Stomach (tissue), 19 donors: ENCODE measurements at regions of chr20 and their contacts with region 1.

Region 1: DNA sequence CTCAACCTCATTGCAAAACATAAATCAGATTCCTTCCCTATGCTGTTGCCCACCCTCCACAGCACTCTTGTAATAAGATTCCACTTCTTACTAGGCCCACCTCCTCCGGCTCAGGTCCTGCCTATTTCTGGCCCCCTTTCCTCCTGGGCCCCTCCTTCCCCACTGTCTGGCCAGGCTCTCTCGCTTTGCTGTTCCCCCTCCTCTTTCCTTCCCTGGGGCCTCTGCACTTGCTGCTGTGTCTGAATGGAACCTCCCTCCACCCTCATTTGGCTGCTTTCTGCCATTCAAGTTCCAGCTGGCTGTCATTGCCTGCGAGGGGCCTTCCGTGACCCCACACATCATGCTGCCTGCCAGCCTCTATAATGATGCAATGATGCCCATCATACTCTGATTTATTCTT is 38.9 kb downstream of the ARHGAP40 start:
- DNase-seq: no peak
- H3K4me3 ChIP-seq: no peak overlapping the region
- H3K27ac ChIP-seq: no peak overlapping the region
- H3K4me1 ChIP-seq: no peaks in the 10 kb centered on the region
- H3K27me3 ChIP-seq: peaks cover 0 to 41% (median 5%) of the 10 kb centered on the region in 3 donors
- CTCF ChIP-seq: no peak
- EP300 ChIP-seq: no peak
- POLR2A ChIP-seq: no peak

Region 2: DNA sequence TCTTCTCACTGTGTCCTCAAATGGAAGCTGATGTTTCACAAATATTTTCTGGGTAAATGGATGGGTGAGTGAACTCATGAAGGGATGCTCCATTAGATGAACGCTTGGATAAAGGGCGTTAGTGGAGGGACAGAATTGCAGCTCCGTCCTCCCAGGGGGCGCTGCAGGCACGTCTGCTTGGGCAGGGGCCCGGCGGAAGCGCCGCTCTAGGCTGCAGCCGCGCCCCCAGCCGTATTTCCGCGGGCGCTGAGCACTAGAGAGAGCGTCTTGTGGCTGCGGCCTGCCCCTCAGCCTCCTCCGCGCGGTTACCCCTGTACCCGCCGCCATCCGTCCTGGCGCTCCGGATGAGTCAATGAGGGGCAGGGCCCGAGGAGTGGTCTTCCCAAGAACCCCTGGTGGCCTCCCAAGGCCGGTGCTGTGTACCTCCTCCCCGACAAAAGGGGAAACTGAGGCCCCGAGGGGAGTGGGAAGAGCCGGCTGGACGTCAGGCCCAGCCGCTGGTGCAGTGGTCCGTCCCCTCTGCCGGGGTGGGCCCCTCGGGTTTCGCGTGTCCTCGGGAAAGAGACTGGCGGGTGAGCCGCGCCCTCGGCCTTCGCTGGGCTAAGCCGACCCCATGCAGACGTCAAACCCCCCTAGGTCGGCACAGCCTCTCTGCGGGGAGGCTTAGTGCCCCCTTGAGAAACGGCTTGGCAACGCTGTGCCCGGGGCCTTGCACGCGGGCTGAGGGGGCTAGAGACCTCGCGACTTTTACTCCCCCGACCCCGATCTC is 193.9 kb before region 1 on chr20:
- intact Hi-C with region 1: no loop called
- DNase-seq: peak; percentile 93 to 97
- H3K4me3 ChIP-seq: peak overlapping the region; percentile 68 to 95 (median 86)
- H3K27ac ChIP-seq: peak overlapping the region; percentile 85 to 90 (median 89)
- H3K4me1 ChIP-seq: peaks cover 9 to 29% (median 24%) of the 10 kb centered on the region in 4 donors
- H3K27me3 ChIP-seq: peaks cover 0 to 3% (median 0%) of the 10 kb centered on the region in 3 donors
- CTCF ChIP-seq: peak in 5 of 7 experiments; percentile 82 to 95 (median 87)
- EP300 ChIP-seq: no peak
- POLR2A ChIP-seq: no peak

Region 3: DNA sequence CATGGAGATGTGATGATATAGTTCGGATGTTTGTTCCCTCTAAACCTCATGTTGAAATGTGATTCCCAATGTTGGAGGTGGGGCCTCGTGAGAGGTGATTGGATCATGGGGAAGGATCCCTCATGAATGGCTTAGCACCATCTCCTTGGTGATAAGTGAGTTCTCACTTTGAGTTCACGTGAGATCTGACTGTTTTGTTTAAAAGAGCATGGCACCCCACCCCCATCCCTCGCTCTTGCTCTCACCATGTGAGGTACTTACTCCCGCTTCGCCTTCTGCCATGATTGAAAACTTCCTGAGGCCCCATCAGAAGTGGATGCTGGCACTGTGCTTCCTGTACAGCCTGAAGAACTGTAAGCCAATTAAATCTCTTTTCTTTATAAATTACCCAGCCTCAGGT is 94.7 kb after region 1 on chr20:
- intact Hi-C with region 1: loop called (anchors 5 kb)
- DNase-seq: no peak
- H3K4me3 ChIP-seq: no peak overlapping the region
- H3K27ac ChIP-seq: no peak overlapping the region
- H3K4me1 ChIP-seq: peaks cover 13 to 18% (median 17%) of the 10 kb centered on the region in 4 donors
- H3K27me3 ChIP-seq: peaks cover 11 to 97% (median 47%) of the 10 kb centered on the region in 3 donors
- CTCF ChIP-seq: no peak
- EP300 ChIP-seq: no peak
- POLR2A ChIP-seq: no peak